OCI-LY7 (cell line): ENCODE measurements at regions of chr11 and their contacts with region 1.

Region 1: DNA sequence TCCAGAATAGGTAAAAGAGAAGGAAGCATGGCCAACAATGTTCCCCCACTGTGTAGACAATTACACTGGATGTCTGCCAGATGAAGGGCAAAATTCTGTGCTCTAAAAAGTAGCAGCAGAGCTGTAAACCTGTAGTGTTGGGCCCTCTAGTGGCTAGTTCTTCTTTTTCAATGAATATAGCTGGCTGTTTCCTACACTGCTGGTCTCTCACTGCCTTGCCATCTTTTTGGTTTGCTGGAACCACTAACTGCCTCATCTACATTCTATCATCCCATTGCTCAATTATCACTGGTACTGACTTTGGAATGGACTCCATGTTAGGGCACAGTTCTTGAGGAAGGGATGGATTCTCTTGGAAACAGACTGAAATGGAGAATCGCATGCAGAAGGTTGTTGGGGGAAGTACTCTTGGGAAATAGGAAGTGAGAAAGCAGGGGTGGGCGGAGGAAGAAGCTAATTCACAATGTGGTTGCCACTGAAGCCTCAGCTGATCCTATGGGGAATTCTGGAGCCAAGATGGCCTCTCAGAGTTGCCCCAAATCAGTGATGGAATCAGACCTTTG is 17.9 kb downstream of the KCNE3 start:
- DNase-seq: peak; percentile 78
- H3K4me3 ChIP-seq: no peak overlapping the region
- H3K27ac ChIP-seq: no peak overlapping the region
- H3K4me1 ChIP-seq: peaks cover 5% of the 10 kb centered on the region
- CTCF ChIP-seq: peak; percentile 88

Region 2: GRCh38 chr11:74255741-74256369 is 193.6 kb before region 1 on chr11:
- CTCF ChIA-PET with region 1: interaction called, 3 read pairs
- POLR2A ChIA-PET with region 1: no interaction called
- intact Hi-C with region 1: loop called (anchors 5 kb)
- DNase-seq: peak; percentile 65
- H3K4me3 ChIP-seq: no peak overlapping the region
- H3K27ac ChIP-seq: no peak overlapping the region
- H3K4me1 ChIP-seq: no peaks in the 10 kb centered on the region
- CTCF ChIP-seq: peak; percentile 96

Region 3: DNA sequence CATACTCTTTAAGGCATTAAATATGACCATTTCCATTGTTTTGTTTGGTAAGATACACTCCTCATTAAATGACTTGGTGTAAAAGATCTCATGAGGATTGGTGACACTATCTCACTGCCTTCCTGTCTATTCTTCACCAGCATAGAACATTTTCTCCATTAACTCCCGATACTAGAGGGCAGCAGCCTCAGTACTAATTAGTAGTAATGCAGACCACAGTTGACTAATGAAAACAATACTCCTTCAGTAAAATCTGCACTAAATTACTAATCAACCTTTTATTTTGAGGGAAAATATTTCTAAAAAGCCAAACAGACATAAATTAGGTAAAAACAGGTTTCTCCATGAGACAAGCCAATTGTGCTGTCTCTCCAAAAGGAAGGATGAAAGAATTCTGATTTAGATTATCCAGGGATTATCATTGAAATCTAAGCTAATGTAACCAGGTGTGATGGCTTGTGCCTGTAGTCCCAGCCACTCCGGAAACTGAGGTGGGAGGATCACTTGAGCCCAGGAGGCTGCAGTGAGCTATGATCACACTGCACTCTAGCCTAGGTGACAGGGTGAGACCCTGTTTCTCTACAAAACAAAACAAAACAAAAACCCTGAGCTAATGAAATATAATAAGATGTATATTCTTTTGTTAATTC is 60.6 kb before region 1 on chr11:
- CTCF ChIA-PET with region 1: interaction called, 5 read pairs
- POLR2A ChIA-PET with region 1: interaction called, 4 read pairs
- intact Hi-C with region 1: loop called (anchors 1 kb)
- DNase-seq: peak; percentile 63
- H3K4me3 ChIP-seq: no peak overlapping the region
- H3K27ac ChIP-seq: no peak overlapping the region
- H3K4me1 ChIP-seq: no peaks in the 10 kb centered on the region
- CTCF ChIP-seq: peak; percentile 94

Region 4: GRCh38 chr11:74570266-74571061 is 121.0 kb after region 1 on chr11:
- CTCF ChIA-PET with region 1: interaction called, 10 read pairs
- POLR2A ChIA-PET with region 1: interaction called, 3 read pairs
- intact Hi-C with region 1: loop called (anchors 1 kb)
- DNase-seq: peak; percentile 59
- H3K4me3 ChIP-seq: no peak overlapping the region
- H3K27ac ChIP-seq: no peak overlapping the region
- H3K4me1 ChIP-seq: no peaks in the 10 kb centered on the region
- CTCF ChIP-seq: peak; percentile 91

Region 5: GRCh38 chr11:74815966-74816365 is 366.5 kb after region 1 on chr11:
- CTCF ChIA-PET with region 1: no interaction called
- POLR2A ChIA-PET with region 1: no interaction called
- intact Hi-C with region 1: no loop called
- DNase-seq: no peak
- H3K4me3 ChIP-seq: no peak overlapping the region
- H3K27ac ChIP-seq: no peak overlapping the region
- H3K4me1 ChIP-seq: no peaks in the 10 kb centered on the region
- CTCF ChIP-seq: no peak